ENCODE measurements at regions of chr12 and their contacts with region 1.

Region 1: DNA sequence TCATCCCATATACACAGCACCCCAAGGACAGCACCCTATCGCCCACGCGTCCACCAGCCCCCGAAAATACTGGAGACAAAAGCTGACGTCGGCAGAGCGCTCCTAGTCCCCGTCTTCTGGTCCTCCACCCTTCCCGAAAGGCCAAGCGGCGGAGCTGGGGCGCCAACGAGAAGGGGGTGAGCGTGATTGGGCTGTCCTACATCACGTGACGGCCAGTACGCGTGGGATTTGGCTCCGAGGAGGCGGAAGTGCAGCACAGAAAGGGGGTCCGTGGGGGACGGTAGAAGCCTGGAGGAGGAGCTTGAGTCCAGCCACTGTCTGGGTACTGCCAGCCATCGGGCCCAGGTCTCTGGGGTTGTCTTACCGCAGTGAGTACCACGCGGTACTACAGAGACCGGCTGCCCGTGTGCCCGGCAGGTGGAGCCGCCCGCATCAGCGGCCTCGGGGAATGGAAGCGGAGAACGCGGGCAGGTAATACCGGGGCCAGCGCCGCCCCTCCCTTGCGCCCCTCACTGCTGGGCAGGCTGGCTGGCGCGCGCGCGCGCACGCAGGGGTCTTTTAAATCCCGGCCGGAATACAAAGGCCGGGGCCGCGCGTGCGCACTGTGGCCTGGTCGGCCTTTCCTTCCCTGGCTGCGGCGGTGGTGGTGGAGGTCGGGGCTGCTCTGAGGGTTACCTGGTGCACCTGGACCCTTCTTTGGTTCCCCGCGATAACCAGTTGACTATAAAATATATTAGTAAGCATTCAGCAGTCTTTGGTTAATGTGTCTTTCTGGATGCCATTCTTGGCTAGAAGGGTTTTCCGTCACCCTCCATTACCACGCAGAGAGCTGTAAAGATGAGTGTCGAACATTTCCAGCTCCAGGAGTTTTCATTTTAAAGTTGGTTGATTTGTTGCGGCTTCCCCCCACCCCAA is at the start of gene TDG:
- DNase-seq: peak; percentile 92

Region 2: GRCh38 chr12:103020839-103021238 is 945.0 kb before region 1 on chr12:
- CTCF ChIA-PET with region 1: no interaction called
- POLR2A ChIA-PET with region 1: no interaction called
- DNase-seq: no peak

Region 3: DNA sequence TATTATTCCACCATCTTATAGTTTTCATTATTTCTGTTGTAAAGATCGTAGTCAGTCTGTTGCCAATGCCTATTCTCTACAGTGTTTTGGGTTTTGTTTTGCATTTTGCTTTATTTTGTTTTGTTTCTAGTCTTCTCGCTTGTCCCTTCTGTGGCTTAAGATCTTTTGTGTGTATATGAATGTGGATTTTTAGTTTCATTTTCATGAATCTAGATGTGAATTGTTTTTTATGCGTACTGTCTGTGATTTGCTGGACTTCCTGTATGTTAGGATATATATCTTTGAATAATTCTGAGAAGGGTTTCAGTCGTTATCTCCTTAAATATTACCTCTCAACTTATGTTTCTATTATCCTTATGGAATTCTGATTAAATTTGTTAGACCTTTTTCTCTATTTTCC is 483.5 kb before region 1 on chr12:
- CTCF ChIA-PET with region 1: no interaction called
- POLR2A ChIA-PET with region 1: no interaction called
- DNase-seq: no peak

Region 4: GRCh38 chr12:103930034-103930786 is 35.6 kb before region 1 on chr12 and contains the start of gene HSP90B1:
- CTCF ChIA-PET with region 1: no interaction called
- POLR2A ChIA-PET with region 1: interaction called, 30 read pairs
- DNase-seq: peak; percentile 97

Region 5: GRCh38 chr12:103947871-103948555 is 17.8 kb before region 1 on chr12:
- CTCF ChIA-PET with region 1: no interaction called
- POLR2A ChIA-PET with region 1: interaction called, 111 read pairs
- DNase-seq: no peak

Region 6: DNA sequence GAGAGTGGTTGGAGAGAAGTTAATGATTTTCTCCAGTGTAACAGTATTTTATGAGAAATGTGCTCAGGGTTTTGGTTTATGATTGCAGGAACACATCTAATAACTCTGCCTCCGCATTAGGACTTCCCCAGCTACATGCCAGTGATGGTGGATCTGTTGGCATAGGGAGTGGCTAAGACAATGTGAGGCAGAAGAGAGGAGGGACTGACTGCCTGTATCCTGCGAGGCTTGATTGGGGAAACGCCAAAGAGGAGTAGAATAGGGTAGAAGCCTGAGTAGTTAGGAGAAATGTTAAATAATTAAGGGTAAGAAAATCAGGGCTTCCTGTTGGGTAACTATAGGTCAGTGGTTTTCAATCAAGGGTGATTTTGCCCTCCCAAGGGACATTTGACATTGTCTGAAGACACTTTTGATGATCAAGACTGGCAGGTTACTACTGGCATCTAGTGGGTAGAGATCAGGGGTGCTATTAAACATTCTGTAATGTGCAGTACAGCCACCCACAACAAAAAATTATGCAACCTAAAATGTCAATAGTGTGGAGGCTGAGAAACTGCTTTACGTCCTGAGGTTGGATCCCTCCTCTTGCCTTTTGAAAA is 12.6 kb after region 1 on chr12:
- CTCF ChIA-PET with region 1: no interaction called
- POLR2A ChIA-PET with region 1: interaction called, 13 read pairs
- DNase-seq: no peak

Region 7: DNA sequence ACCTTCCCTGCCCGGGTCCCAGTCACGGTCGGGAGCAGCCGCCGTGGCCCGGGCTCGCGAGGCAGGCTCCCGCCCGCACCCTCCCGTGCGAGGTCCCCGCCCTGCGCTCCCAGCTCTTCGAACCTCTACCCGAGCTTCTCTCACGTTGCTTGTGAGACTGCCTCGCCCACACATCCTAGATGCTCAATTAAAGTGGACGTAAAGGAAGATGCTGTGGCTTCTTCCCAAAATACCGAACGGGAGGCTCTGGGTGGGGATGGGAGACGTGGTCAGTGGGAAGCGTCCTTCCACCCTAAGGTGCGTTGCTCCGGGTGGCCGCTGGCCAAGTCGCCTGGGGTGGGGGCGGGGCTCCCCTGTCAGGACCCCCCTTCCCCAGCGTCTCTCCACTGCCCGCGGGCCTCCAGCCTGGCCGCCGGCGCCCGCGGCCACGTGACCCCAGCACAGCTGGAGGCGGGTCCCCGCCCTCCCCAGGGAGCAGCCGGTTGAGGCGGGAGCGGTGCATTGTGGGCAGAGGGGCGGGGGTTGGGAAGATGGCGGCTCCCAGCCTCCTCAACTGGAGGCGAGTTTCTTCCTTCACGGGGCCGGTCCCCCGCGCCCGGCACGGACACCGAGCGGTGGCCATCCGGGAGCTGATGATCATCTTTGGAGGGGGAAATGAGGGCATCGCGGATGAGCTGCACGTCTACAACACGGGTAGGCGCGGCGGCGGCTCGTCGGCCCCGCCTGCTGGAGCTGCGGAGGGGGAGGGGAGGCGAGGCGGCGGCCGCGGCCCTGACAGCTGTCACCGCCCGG is 98.4 kb after region 1 on chr12 and contains the start of gene HCFC2:
- CTCF ChIA-PET with region 1: no interaction called
- POLR2A ChIA-PET with region 1: interaction called, 14 read pairs
- DNase-seq: peak; percentile 94

Region 8: GRCh38 chr12:104137913-104138796 is 172.3 kb after region 1 on chr12 and contains the start of gene NFYB:
- CTCF ChIA-PET with region 1: no interaction called
- POLR2A ChIA-PET with region 1: interaction called, 10 read pairs
- DNase-seq: peak; percentile 95